ENCODE measurements at regions of chr1 and their contacts with region 1.

Region 1: GRCh38 chr1:109099938-109100773 is 9.6 kb downstream of the TMEM167B start:
- DNase-seq: peak; percentile 100
- H3K4me3 ChIP-seq: peak overlapping the region; percentile 96
- H3K27ac ChIP-seq: peak overlapping the region; percentile 92
- H3K4me1 ChIP-seq: peaks cover 4% of the 10 kb centered on the region
- H3K27me3 ChIP-seq: no peaks in the 10 kb centered on the region
- CTCF ChIP-seq: peak; percentile 92

Region 2: DNA sequence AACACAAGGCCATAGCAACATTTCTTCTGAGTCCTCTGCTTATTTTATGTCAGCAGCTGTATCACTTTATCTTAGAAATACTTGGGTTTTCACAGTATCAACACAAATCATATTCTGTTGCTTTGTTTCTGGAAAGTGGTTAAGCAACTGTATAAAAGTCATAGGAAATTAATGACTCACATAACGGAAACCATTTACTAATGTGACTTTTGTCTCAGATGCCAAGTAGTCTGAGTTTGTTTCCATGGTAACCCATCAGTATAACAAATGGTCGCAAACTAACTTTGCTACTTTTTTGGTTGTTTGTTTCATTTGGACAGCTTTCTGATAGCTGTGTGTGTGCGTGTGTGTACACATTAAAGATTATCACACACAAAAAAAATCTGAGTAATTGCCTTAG is 509.2 kb before region 1 on chr1:
- CTCF ChIA-PET with region 1: no interaction called
- POLR2A ChIA-PET with region 1: interaction called, 12 read pairs
- intact Hi-C with region 1: no loop called
- DNase-seq: peak; percentile 96
- H3K4me3 ChIP-seq: peak overlapping the region; percentile 17
- H3K27ac ChIP-seq: peak overlapping the region; percentile 79
- H3K4me1 ChIP-seq: peaks cover 59% of the 10 kb centered on the region
- H3K27me3 ChIP-seq: no peaks in the 10 kb centered on the region
- CTCF ChIP-seq: no peak

Region 3: DNA sequence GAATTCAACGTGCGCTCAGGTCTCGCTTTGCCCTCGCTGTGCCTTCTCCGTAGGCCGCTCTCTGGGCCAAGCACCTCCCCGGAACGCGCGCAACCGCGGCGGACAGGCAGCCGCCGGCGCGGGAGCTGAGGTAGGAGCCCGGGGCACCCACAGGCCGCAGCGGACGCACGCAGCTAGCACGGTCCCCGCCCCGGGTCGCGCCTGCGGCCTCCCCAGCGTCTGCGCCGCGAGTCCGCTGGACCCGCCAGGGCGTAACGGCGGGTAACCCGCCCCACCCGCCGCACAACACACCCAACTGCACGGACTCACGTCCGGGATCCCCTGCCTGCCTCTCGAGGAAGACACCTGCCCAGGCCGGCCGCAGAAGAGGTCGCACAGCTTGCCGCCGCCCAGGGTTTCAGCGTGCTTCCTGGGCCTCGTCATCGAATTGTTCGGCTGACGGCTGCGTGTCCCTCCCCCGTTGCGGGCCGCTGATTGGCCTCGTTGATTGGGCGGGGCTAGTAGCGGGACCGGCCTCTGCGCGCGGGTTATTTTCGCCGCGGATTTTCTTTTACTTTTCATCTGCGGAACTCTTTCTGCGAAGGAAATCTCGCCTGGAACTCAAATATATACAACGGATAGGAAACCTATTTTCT is 137.0 kb before region 1 on chr1 and contains the start of gene CLCC1:
- CTCF ChIA-PET with region 1: no interaction called
- POLR2A ChIA-PET with region 1: interaction called, 4 read pairs
- intact Hi-C with region 1: loop called (anchors 10 kb)
- DNase-seq: peak; percentile 95
- H3K4me3 ChIP-seq: peak within 1 kb of the TSS; percentile 81
- H3K27ac ChIP-seq: peak within 1 kb of the TSS; percentile 95
- H3K4me1 ChIP-seq: peaks cover 7% of the 10 kb centered on the region
- H3K27me3 ChIP-seq: no peaks in the 10 kb centered on the region
- CTCF ChIP-seq: no peak
- total RNA-seq, gene CLCC1: 58.4 and 60.2 TPM in 2 replicates

Region 4: DNA sequence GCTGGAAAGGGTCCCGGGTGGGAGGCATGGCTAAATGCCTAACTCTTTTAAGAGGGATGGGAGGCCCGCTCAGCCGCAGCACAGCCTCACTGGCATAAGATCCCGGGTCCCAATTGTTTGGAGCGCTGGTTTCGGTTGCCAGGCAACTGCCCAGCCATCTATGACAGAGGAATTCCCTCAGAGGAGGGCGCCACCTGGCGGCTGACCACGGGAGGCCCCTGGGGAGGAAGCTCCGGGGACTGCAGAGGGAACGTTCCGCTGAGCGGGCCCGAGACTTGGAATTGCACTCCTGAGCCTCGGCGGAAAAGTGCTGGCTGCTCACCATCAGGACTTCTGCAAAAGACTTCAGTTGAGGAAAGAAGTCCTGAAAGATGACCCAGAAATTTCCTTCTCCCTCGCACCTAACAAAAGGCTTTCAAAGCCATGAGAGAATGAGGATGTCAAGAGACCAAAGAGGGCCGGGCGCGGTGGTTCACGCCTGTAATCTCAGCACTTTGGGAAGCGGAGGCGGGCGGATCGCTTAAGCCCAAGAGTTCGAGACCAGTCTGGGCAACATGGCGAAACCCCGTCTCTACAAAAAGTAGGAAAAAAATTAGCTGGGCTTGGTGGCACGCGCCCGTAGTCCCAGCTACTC is 12.6 kb after region 1 on chr1:
- CTCF ChIA-PET with region 1: interaction called, 12 read pairs
- POLR2A ChIA-PET with region 1: no interaction called
- intact Hi-C with region 1: no loop called
- DNase-seq: peak; percentile 97
- H3K4me3 ChIP-seq: peak overlapping the region; percentile 35
- H3K27ac ChIP-seq: no peak overlapping the region
- H3K4me1 ChIP-seq: peaks cover 19% of the 10 kb centered on the region
- H3K27me3 ChIP-seq: peaks cover 37% of the 10 kb centered on the region
- CTCF ChIP-seq: peak; percentile 99

Region 5: DNA sequence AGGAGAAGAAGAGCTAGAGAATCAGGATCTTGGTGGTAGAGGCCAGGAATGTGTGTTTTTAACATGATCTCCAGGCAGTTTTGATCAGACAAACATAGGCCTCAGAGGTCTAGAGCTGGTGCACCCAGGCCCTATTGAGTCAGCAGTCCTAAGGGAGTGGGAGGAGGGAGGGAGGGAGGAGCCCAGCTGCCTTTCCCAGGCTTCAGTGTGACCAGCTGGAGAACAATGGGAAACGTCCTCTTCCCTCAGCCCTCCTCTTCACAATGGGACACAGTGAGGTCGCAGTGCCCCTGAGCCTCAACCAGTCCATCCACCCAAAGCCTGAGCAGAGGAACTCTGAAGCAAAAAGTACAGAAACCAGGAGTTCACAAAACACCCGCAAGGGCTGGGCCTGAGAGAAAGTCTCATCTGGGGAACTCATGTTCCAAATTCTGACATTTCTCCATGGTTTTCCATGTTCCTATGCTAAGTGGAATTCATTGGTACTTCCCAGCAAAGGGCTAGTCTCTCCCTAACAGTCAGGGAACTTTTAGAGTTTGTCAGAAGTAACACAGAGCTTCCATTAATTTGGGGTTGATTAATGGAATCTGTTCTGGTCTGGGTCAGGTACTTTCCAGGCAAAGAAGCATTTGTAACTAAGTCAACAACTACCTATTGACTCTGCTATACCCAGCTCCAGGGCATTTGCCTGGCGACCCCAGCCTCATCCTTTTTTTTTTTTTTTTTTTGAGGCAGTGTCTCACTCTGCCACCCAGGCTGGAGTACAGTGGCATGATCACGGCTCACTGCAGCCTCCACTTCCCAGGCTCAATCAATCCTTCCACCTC is 51.2 kb after region 1 on chr1:
- CTCF ChIA-PET with region 1: no interaction called
- POLR2A ChIA-PET with region 1: no interaction called
- intact Hi-C with region 1: no loop called
- DNase-seq: no peak
- H3K4me3 ChIP-seq: no peak overlapping the region
- H3K27ac ChIP-seq: no peak overlapping the region
- H3K4me1 ChIP-seq: peaks cover 22% of the 10 kb centered on the region
- H3K27me3 ChIP-seq: no peaks in the 10 kb centered on the region
- CTCF ChIP-seq: no peak

Region 6: GRCh38 chr1:109933856-109934711 is 833.9 kb after region 1 on chr1:
- CTCF ChIA-PET with region 1: no interaction called
- POLR2A ChIA-PET with region 1: no interaction called
- intact Hi-C with region 1: no loop called
- DNase-seq: no peak
- H3K4me3 ChIP-seq: no peak overlapping the region
- H3K27ac ChIP-seq: no peak overlapping the region
- H3K4me1 ChIP-seq: no peaks in the 10 kb centered on the region
- H3K27me3 ChIP-seq: no peaks in the 10 kb centered on the region
- CTCF ChIP-seq: no peak